H1 (cell line): ENCODE measurements at regions of chr1 and their contacts with region 1.

Region 1: DNA sequence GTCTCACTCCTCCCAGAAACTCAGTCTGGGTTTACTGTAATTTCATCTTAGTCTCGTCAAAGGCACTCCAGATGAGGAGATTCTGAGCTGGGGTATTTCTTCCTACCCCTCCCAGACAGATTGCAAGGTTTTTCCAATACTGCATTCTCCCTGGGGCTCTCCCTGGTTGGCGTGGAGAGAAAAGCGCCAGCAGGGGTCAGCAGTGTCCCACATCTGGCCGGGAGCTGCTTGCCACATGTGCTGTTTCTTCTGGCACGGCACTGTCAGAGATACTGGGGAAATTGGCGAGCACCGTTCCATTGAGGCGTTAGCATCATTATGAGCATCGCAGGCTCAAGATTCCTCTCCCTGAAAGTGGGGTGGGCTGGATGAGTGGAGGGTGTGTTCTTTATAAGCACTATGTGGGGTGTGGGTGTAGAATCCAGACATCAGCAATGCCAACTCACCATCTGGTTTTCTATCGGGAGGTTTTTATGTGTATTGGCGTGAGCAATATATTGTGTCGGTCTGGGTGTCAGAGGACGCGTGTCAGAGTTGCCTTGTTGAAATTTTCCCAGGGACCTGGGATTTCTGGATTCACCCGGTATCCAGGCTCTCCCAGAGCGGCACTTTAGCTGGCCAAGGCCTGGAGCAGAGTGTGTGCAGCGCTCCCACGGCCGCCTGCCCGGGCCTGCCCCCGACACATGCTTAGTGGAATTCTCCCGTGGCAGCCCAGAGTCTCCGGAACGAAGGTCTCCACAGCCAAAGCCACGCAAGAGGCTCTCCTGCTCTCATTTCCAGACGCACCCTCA is 8.0 kb upstream of the NAV1 start:
- DNase-seq: peak in 1 of 2 experiments; percentile 90
- H3K4me3 ChIP-seq: no peak overlapping the region
- H3K27ac ChIP-seq: no peak overlapping the region
- H3K4me1 ChIP-seq: peaks cover 0 to 5% (median 3%) of the 10 kb centered on the region in 4 experiments; a peak in 3 of 7 replicates
- H3K27me3 ChIP-seq: no peaks in the 10 kb centered on the region
- CTCF ChIP-seq: peak; percentile 88 to 92 (median 91)
- EP300 ChIP-seq: no peak
- POLR2A ChIP-seq: no peak
- RAD21 ChIP-seq: peak; percentile 96

Region 2: DNA sequence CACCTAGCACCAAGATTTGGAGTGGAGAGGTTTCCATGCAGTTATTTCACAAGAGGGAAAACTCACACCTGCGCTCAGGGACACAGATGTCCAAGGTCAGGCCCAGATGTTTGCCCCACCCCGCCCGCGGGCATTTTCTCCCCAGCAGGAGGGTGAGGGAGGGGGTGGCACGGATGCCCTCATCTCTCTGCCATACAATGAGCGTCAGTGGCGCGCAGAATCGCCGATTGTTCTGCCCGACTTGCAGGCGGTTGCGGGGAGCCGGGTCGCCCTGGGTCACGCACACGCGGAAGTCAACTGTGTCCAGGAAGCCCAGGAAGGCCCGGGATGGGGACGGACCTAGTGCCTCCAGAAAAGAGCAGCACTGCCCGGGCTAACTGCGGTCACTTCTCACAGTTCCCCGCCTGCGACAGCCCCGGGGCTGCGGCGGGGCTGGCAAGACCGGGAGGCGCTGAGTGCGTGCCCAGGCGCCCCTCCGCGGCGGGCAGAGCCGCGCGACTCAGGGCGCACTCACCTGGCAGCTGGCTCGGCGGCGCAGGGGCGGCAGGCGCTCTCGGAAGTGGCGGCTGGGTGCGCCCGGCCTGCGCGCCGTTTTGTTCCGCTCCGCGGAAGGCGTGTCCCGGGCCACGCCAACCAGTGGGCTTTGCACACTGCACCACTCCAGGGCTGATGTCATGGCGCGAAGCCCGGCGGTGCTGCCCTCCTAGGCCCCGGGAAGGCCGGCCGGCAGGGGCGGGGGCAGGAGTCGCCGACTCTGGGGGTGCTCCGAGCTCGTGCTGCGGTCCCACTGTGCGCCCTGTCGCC is 24.2 kb before region 1 on chr1 and contains the start of gene CSRP1:
- CTCF ChIA-PET with region 1: interaction called, 929 read pairs
- POLR2A ChIA-PET with region 1: no interaction called
- DNase-seq: no peak
- H3K4me3 ChIP-seq: peak within 1 kb of the TSS; percentile 36 to 61 (median 43)
- H3K27ac ChIP-seq: no peak within 1 kb of the TSS
- H3K4me1 ChIP-seq: peaks cover 8 to 24% (median 16%) of the 10 kb centered on the region in 4 experiments
- H3K27me3 ChIP-seq: peaks cover 3 to 33% (median 21%) of the 10 kb centered on the region in 4 experiments
- CTCF ChIP-seq: peak in 1 of 3 experiments; percentile 8; a peak in 1 of 4 replicates
- EP300 ChIP-seq: no peak
- POLR2A ChIP-seq: 0 out of 3 replicates have a peak, but pooled peaks of 1 of the 2 experiments have one; percentile 37
- RAD21 ChIP-seq: no peak
- total RNA-seq, gene CSRP1: 22.3 and 24.1 TPM in 2 replicates

Region 3: DNA sequence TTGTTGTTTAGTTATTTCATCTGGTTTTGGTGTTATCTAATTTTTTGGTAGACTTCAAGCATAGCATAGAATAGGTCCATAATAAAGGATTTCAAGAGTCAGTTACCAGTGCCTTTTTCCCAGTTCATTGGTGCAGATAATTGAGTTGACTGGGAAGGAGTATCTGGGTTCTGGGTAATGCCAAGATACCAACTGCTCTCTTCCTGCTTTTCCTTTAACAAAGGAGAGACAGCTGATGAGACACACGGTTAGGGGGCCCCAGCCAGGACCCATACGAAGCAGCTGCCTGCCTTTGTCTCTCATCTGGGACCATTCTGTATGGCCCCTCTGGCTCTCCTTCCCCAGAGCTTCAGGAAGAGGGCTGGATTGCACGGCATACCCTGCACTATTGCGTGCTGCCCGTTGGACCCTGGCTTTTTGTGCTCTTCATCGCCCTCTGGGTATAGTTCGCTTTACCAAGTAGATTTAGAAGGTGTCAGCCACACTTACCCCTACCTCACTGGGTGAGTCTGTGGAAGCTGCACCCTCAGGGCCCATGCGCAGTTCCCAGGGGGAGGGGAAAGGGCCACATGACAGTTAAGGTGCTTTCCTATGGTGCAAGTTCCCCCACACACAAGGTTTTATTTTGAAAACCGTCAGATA is 15.0 kb after region 1 on chr1:
- CTCF ChIA-PET with region 1: interaction called, 67 read pairs
- POLR2A ChIA-PET with region 1: interaction called, 3 read pairs
- DNase-seq: no peak
- H3K4me3 ChIP-seq: no peak overlapping the region
- H3K27ac ChIP-seq: no peak overlapping the region
- H3K4me1 ChIP-seq: peaks cover 0 to 2% (median 2%) of the 10 kb centered on the region in 4 experiments; a peak in 3 of 7 replicates
- H3K27me3 ChIP-seq: peaks cover 0 to 8% (median 5%) of the 10 kb centered on the region in 4 experiments; a peak in 6 of 7 replicates
- CTCF ChIP-seq: peak; percentile 37 to 48 (median 46)
- EP300 ChIP-seq: no peak
- POLR2A ChIP-seq: no peak
- RAD21 ChIP-seq: peak in 1 of 2 experiments; percentile 26; a peak in 2 of 4 replicates

Region 4: DNA sequence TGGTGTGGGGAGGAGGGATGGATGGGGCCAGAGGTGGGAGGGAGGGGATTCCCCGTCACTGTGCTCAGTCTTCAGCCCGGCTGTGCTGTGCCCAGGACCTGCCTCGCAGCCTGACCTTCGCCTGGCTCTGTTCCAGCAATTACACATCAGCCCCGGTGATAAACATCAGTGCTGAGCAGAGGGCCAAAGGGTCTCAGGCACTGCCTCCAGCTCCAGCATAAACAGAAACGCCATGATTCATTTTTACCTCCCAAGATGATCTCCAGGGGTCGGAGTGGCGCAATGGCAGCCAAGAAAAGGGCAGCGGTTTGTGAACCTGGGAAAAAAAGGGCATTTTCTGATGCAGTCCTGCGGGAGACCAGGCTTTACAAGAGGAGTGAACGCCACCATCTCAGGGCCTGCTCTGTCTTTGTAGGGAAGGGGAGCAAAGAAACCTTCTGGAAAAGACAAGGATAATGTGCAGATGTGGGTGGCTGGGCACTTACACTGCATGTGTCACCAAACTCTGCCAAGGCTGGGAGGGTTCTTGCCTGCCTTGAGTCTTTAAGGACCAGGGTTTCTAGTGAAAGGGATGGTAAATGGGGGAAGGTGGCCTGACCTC is 385.8 kb after region 1 on chr1:
- CTCF ChIA-PET with region 1: no interaction called
- POLR2A ChIA-PET with region 1: no interaction called
- DNase-seq: no peak
- H3K4me3 ChIP-seq: no peak overlapping the region
- H3K27ac ChIP-seq: no peak overlapping the region
- H3K4me1 ChIP-seq: peaks cover 0 to 3% (median 1%) of the 10 kb centered on the region in 4 experiments; a peak in 5 of 7 replicates
- H3K27me3 ChIP-seq: no peaks in the 10 kb centered on the region
- CTCF ChIP-seq: no peak
- EP300 ChIP-seq: no peak
- POLR2A ChIP-seq: no peak
- RAD21 ChIP-seq: no peak